Heart right ventricle (tissue), 16 donors: ENCODE measurements at regions of chr9 and their contacts with region 1.

Region 1: DNA sequence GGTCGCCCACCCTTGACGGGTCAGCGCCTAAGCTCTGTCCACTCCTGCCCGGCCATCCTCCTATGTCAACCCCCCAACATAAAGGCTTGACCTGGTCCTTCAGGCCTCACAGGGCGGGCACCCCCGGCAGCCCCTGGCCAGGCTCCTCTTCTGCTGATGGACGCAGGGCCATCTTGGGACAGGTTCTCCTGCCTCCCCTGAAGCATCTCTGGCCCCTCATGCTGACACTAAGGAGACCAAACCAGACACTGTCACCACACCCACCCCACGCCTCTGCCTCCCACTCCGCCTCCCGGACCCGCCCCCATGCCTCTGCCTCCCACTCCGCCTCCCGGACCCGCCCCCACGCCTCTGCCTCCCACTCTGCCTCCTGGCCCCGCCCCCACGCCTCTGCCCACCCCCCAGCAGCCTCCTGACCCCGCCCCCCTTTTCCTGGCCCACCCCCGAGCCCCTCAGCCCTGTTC is 6.8 kb downstream of the OBP2A start:
- DNase-seq: no peak
- ATAC-seq: no peak
- H3K4me3 ChIP-seq: no peak overlapping the region
- H3K27ac ChIP-seq: no peak overlapping the region
- H3K4me1 ChIP-seq: no peaks in the 10 kb centered on the region
- H3K27me3 ChIP-seq: peaks cover 0 to 5% (median 0%) of the 10 kb centered on the region in 7 donors
- CTCF ChIP-seq: no peak

Region 2: DNA sequence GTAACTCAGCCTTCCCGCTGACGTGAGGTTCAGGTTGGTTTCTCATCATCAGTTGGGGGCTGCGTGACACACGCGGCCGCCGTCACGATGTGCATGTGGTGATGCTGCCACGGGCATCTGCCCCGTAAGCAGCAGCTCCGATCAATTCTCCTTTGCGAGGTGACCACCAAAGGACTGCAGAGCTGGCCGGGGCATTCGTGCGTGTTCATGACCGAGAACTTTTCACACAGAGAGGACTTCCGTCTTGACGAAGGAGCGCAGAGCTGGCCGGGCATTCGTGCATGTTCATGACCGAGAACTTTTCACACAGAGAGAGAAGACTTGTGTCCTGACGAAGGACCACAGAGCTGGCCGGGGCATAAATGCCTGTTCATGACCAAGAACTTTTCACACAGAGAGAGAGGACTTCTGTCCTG is 35.3 kb before region 1 on chr9:
- intact Hi-C with region 1: loop called in 1 of 10 experiments (anchors 1 kb)
- DNase-seq: no peak
- ATAC-seq: no peak
- H3K4me3 ChIP-seq: no peak overlapping the region
- H3K27ac ChIP-seq: no peak overlapping the region
- H3K4me1 ChIP-seq: peaks cover 0 to 7% (median 0%) of the 10 kb centered on the region in 9 donors
- H3K27me3 ChIP-seq: peaks cover 0 to 4% (median 0%) of the 10 kb centered on the region in 7 donors
- CTCF ChIP-seq: no peak